Heart left ventricle (tissue), 16 donors: ENCODE measurements at regions of chr7 and their contacts with region 1.

Region 1: DNA sequence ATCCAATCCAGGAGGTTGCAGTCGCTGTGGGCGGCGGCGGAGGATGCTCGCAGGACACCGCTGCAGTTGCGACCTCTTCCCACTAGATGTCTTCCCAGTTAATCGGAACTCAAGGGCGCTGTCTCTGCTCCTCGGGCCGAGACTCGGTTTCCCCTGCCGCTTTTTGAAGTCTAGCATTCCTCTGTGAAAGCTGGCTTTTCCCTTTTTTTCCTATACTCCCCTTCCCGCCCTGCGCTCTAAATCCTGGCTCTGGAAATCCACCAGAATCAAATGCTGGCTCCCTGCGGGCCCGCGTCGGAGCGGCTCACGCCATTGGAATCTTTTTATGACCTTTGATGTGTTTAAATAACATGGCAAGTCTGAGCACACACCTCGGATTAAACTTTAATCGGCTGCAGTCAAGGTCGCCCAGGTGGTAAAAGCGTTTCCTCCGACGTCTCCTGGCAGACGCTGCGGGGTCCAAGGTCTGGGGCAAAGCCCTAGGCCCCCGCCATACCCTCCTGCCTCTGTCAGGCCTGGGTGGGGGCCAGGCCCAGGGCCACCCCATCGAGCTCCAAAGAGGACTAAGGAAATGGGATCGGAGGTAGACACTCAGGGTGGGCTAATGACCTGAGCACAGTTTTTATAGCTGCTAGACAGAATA is 10.7 kb upstream of the HOXA13 start:
- DNase-seq: peak in 1 of 5 donors; percentile 56
- ATAC-seq: peak in 3 of 4 donors; percentile 62 to 78 (median 66)
- H3K4me3 ChIP-seq: peak overlapping the region in 8 of 12 donors; percentile 4 to 41 (median 32)
- H3K27ac ChIP-seq: no peak overlapping the region
- H3K4me1 ChIP-seq: peaks cover 0 to 22% (median 8%) of the 10 kb centered on the region in 12 donors
- H3K27me3 ChIP-seq: peaks cover 50 to 98% (median 88%) of the 10 kb centered on the region in 9 donors
- CTCF ChIP-seq: peak; percentile 57 to 80 (median 70)
- POLR2A ChIP-seq: no peak

Region 2: GRCh38 chr7:27242555-27243339 is 32.2 kb after region 1 on chr7 and contains the start of gene EVX1:
- intact Hi-C with region 1: no loop called
- DNase-seq: no peak
- ATAC-seq: no peak
- H3K4me3 ChIP-seq: peak within 1 kb of the TSS in 8 of 12 donors; percentile 7 to 28 (median 18)
- H3K27ac ChIP-seq: no peak within 1 kb of the TSS
- H3K4me1 ChIP-seq: peaks cover 0 to 56% (median 24%) of the 10 kb centered on the region in 12 donors
- H3K27me3 ChIP-seq: peaks cover 85 to 100% (median 100%) of the 10 kb centered on the region in 9 donors
- CTCF ChIP-seq: no peak
- POLR2A ChIP-seq: no peak
- total RNA-seq, gene EVX1: not detected

Region 3: GRCh38 chr7:27576360-27576944 is 365.9 kb after region 1 on chr7:
- intact Hi-C with region 1: loop called in 9 of 10 experiments (anchors 5 to 10 kb)
- DNase-seq: no peak
- ATAC-seq: peak in 2 of 4 donors; percentile 48 to 62
- H3K4me3 ChIP-seq: no peak overlapping the region
- H3K27ac ChIP-seq: no peak overlapping the region
- H3K4me1 ChIP-seq: no peaks in the 10 kb centered on the region
- H3K27me3 ChIP-seq: no peaks in the 10 kb centered on the region
- CTCF ChIP-seq: peak; percentile 48 to 77 (median 66)
- POLR2A ChIP-seq: no peak

Region 4: GRCh38 chr7:27774717-27775328 is 564.3 kb after region 1 on chr7:
- intact Hi-C with region 1: loop called in 5 of 10 experiments (anchors 10 kb)
- DNase-seq: no peak
- ATAC-seq: no peak
- H3K4me3 ChIP-seq: no peak overlapping the region
- H3K27ac ChIP-seq: no peak overlapping the region
- H3K4me1 ChIP-seq: peaks cover 0 to 26% (median 0%) of the 10 kb centered on the region in 12 donors
- H3K27me3 ChIP-seq: no peaks in the 10 kb centered on the region
- CTCF ChIP-seq: peak; percentile 22 to 69 (median 48)
- POLR2A ChIP-seq: no peak

Region 5: DNA sequence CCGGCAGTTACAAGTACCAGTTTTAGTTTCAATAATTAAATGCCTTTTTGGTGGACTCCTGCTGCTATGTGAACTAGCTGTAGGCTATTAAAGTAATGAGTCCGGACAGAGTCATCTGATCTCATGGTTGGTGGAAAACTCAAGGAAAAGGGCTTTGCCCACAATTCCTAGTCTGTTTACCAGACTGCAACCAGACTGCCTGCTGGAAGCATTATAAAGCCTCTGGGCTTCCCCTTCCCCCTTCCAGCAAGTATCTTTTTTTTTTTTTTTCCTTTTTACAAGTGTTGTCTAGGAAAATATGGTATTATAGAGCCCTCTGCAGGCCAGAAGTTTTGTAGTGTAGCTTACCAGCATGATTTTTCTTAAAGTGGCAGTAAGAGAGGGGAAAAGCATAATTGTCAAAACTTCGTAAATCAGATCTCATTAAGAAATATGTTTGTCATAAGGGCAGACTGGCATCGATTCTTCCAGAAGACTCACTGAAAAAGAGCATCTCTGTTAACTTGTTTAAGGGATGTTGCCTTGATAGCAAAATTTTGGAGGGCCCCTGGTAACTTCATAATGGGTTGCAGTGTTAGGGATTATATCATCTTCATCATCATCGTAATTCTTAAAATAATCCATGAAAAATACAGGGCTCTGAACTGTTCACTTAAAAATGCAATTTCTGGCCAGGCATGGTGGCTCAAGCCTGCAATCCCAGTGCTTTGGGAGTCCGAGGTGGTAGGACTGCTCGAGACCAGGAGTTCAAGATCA is 710.7 kb after region 1 on chr7:
- intact Hi-C with region 1: loop called in 5 of 10 experiments (anchors 5 kb)
- DNase-seq: peak in 2 of 5 donors; percentile 20 to 27
- ATAC-seq: peak in 3 of 4 donors; percentile 47 to 73 (median 59)
- H3K4me3 ChIP-seq: no peak overlapping the region
- H3K27ac ChIP-seq: no peak overlapping the region
- H3K4me1 ChIP-seq: peaks cover 0 to 31% (median 10%) of the 10 kb centered on the region in 12 donors
- H3K27me3 ChIP-seq: no peaks in the 10 kb centered on the region
- CTCF ChIP-seq: peak; percentile 32 to 68 (median 59)
- POLR2A ChIP-seq: no peak